ENCODE measurements at regions of chr4 and their contacts with region 1.

Region 1: GRCh38 chr4:77385124-77385969 is 220.3 kb upstream of the CXCL13 start:
- DNase-seq: peak; percentile 34
- H3K4me3 ChIP-seq: no peak overlapping the region
- H3K27ac ChIP-seq: no peak overlapping the region
- H3K27me3 ChIP-seq: no peaks in the 10 kb centered on the region
- CTCF ChIP-seq: peak; percentile 84

Region 2: GRCh38 chr4:77618383-77619122 is 233.2 kb after region 1 on chr4:
- CTCF ChIA-PET with region 1: interaction called, 12 read pairs
- POLR2A ChIA-PET with region 1: no interaction called
- DNase-seq: peak; percentile 30
- H3K4me3 ChIP-seq: no peak overlapping the region
- H3K27ac ChIP-seq: no peak overlapping the region
- H3K27me3 ChIP-seq: peaks cover 16% of the 10 kb centered on the region
- CTCF ChIP-seq: peak; percentile 88

Region 3: DNA sequence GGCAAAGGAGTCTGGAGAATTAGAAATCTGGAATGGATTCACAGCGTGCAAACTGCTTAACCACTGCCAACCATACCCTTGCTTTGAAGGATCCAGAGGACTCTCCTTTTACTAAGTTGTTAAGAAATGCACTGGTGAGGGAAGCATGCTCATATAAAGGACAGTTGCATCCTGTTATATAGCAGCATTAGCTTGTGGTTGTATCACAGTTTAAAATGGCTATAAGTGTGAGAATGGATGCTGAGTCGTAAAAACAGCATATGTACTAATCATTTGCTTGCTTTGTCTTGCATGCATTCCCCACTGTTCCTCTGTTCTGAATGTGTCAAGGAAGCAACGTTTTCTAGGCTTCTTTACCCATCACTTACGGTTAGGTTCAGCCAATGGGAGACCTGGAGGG is 321.4 kb after region 1 on chr4:
- CTCF ChIA-PET with region 1: no interaction called
- POLR2A ChIA-PET with region 1: no interaction called
- DNase-seq: no peak
- H3K4me3 ChIP-seq: no peak overlapping the region
- H3K27ac ChIP-seq: no peak overlapping the region
- H3K27me3 ChIP-seq: peaks cover 5% of the 10 kb centered on the region
- CTCF ChIP-seq: no peak